HCT116 (cell line): ENCODE measurements at regions of chr1 and their contacts with region 1.

Region 1: DNA sequence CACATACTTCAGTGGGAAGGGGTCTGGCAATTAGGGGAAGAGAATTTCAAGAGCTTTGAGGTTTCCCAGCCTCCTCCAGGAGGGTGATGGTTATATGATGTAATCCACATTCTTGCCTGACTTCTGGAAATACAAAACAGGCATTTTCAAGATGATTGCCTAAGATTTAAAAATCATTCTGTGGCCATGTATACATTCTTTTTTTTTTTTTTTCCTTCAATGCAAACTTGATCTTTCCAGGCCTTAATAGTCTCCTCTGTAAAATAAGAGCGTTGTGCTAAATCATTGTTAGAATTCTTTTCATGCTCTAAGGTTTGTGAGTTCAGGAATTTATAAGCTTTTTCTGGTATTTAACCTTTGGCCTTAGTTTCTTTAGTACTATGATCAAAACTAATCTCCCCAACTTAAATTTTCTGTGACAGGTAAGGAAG is 192.3 kb upstream of the HMCN1 start:
- DNase-seq: no peak
- ATAC-seq: no peak
- H3K4me3 ChIP-seq: no peak overlapping the region
- H3K27ac ChIP-seq: no peak overlapping the region
- H3K4me1 ChIP-seq: peaks cover 0 to 8% of the 10 kb centered on the region in 2 experiments; a peak in 2 of 4 replicates
- H3K27me3 ChIP-seq: no peaks in the 10 kb centered on the region
- CTCF ChIP-seq: no peak
- POLR2A ChIP-seq: no peak
- RAD21 ChIP-seq: no peak

Region 2: DNA sequence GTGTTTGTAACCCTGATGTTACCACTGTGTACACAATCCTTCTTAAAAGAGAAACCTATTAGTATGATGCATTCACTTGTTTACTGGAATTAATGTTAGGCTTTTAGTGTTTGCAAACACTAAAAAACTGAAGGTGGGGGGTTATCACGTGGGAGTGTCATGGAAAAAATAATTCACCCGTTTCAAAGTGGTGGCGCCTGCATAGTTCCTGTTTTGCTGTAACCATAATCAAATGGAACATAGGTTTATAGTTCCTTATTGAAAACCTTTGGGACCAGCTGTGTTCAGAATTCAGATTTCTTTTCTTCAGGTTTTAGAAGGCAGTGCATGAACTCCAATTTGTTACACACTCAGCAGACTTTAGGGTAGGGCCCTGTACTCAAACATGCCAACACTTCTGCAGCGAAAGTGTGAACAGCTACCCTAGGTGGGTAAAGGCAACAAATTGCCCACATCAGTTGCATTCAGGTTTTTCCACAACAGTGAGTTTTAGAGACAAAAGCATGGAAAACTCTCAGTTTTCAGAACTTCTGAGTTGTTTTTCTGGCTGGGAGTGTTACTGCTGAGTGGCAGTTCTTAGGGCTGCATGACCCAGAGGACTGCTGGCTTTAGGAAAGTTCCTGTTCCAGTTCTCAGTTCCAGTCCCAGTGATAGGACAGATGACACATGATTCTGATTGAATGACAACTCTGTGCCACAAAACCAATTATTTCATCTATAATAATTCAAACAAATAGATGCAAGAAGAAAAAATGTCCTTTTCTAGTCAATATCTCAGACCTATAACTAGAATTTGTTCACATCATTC is 195.8 kb before region 1 on chr1:
- CTCF ChIA-PET with region 1: no interaction called
- POLR2A ChIA-PET with region 1: no interaction called
- RAD21 ChIA-PET with region 1: no interaction called
- intact Hi-C with region 1: loop called (anchors 10 kb)
- DNase-seq: no peak
- ATAC-seq: no peak
- H3K4me3 ChIP-seq: no peak overlapping the region
- H3K27ac ChIP-seq: no peak overlapping the region
- H3K4me1 ChIP-seq: no peaks in the 10 kb centered on the region
- H3K27me3 ChIP-seq: no peaks in the 10 kb centered on the region
- CTCF ChIP-seq: no peak
- POLR2A ChIP-seq: no peak
- RAD21 ChIP-seq: no peak

Region 3: DNA sequence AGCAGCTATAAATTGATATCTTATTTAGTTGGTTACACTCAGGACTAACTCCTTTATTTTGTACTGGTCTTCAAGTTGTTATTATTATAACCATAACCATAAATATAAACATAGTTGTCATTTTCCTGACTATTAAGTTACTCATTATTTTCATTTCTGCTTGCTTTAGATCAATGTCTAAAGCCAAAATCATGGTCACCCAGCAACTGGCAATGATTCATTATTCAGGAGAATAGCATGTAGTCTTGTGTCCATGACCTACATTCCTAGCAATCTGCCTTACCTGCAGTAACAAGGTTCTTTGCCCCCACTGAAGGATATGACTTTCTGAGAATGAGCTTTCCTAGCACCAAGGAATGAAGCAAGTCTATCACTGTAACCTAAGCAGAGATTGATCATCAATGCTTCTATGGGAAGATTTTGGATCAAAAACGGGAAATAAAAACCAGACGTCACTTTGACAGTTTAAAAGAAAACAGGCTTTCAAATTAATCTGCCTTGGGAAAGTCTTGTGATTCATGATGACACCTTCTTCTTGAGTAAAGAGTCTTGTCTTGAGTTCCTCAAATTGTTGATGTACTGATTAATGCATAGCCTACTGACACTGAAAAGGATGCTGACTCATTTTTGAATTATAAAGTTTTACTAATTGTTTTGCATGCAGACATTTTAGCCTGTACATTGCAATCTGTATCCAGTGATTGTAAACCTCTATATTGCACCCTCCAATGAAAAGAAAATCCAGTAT is 21.5 kb before region 1 on chr1:
- CTCF ChIA-PET with region 1: no interaction called
- POLR2A ChIA-PET with region 1: no interaction called
- RAD21 ChIA-PET with region 1: no interaction called
- intact Hi-C with region 1: no loop called
- DNase-seq: no peak
- ATAC-seq: no peak
- H3K4me3 ChIP-seq: no peak overlapping the region
- H3K27ac ChIP-seq: no peak overlapping the region
- H3K4me1 ChIP-seq: no peaks in the 10 kb centered on the region
- H3K27me3 ChIP-seq: no peaks in the 10 kb centered on the region
- CTCF ChIP-seq: no peak
- POLR2A ChIP-seq: no peak
- RAD21 ChIP-seq: no peak